H1 (cell line): ENCODE measurements at regions of chr5 and their contacts with region 1.

Region 1: GRCh38 chr5:51398875-51399642 is 15.8 kb downstream of the ISL1 start:
- DNase-seq: no peak
- H3K4me3 ChIP-seq: peak overlapping the region; percentile 26 to 56 (median 44)
- H3K27ac ChIP-seq: no peak overlapping the region
- H3K4me1 ChIP-seq: peaks cover 5 to 18% (median 14%) of the 10 kb centered on the region in 4 experiments
- H3K27me3 ChIP-seq: peaks cover 49 to 68% (median 64%) of the 10 kb centered on the region in 4 experiments
- CTCF ChIP-seq: no peak
- EP300 ChIP-seq: no peak
- POLR2A ChIP-seq: no peak
- RAD21 ChIP-seq: no peak

Region 2: DNA sequence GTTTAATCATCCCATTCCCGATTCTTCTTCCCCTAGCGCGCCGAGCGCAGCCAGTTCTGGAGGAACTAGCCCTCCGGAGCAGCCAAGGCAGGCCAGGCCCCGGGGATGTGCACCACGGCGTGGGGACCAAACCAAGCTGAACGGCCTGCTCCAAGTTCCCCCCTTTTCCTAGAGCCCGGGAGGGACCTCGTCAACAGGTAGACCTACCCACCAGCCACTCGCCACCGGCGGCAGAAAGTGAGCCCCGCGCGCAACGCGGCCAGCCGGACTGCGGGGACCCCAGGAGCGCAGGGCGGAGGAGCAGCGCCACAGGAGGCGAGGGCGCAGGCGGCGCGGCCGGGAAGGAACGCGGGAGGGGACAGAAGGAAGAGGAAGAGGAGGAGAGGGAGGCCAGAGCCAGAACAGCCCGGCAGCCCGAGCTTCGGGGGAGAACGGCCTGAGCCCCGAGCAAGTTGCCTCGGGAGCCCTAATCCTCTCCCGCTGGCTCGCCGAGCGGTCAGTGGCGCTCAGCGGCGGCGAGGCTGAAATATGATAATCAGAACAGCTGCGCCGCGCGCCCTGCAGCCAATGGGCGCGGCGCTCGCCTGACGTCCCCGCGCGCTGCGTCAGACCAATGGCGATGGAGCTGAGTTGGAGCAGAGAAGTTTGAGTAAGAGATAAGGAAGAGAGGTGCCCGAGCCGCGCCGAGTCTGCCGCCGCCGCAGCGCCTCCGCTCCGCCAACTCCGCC is 16.1 kb before region 1 on chr5 and contains the start of gene ISL1:
- CTCF ChIA-PET with region 1: interaction called, 12 read pairs
- POLR2A ChIA-PET with region 1: interaction called, 9 read pairs
- DNase-seq: peak in 1 of 2 experiments; percentile 88
- H3K4me3 ChIP-seq: peak within 1 kb of the TSS; percentile 37 to 66 (median 55)
- H3K27ac ChIP-seq: no peak within 1 kb of the TSS
- H3K4me1 ChIP-seq: peaks cover 10 to 48% (median 26%) of the 10 kb centered on the region in 4 experiments
- H3K27me3 ChIP-seq: peaks cover 47 to 99% (median 81%) of the 10 kb centered on the region in 4 experiments
- CTCF ChIP-seq: no peak
- EP300 ChIP-seq: no peak
- POLR2A ChIP-seq: peak in 1 of 2 experiments; percentile 47; a peak in 1 of 3 replicates
- RAD21 ChIP-seq: no peak
- total RNA-seq, gene ISL1: 0.19 TPM in 1 of 2 replicates, not detected in the other

Region 3: GRCh38 chr5:51509288-51509687 is 110.2 kb after region 1 on chr5:
- CTCF ChIA-PET with region 1: no interaction called
- POLR2A ChIA-PET with region 1: no interaction called
- DNase-seq: no peak
- H3K4me3 ChIP-seq: no peak overlapping the region
- H3K27ac ChIP-seq: no peak overlapping the region
- H3K4me1 ChIP-seq: no peaks in the 10 kb centered on the region
- H3K27me3 ChIP-seq: no peaks in the 10 kb centered on the region
- CTCF ChIP-seq: no peak
- EP300 ChIP-seq: no peak
- POLR2A ChIP-seq: no peak
- RAD21 ChIP-seq: no peak